Dendritic cell treated with granulocyte-macrophage colony-stimulating factor and Interleukin-4, amounts not matched to agents 40 ng/mL and 50 ng/mL, for 4 days (primary cell): ENCODE measurements at regions of chr2 and their contacts with region 1.

Region 1: DNA sequence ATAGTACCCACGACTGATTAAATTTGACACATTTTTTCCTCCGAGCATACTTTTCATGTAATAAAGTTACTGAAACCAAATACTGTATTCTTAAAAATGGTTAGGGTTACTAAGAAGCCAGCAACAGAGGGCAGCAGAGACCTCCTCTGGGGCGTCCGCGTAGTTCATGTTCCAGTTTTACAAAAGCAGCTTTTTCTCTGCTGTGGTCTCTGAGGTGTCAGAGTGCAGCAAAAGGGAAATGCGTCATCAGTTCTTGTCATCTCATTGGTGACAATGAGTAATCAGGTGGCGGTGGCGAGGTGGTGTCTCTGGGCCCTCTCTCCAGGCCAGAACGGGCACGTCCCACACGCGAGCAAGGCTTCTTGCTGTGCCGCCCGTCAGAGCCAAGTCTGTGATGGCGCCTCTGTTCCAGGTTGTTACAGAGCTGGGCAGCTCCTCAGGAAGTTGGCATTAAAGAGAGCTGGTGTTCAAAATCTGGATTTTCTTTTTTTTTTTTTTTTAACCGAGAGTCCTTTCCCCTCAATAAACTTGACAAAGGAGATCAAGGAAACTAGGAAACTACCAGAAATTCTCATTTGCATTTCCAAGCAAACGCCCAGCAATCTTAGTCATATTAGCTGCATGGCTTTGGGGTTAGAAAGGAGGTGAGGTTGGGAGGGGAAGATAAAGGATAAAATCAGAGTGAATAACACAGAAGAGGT is 98.6 kb upstream of the BZW1 start:
- H3K4me3 Mint-ChIP-seq: peak overlapping the region; percentile 71
- H3K27ac Mint-ChIP-seq: peak overlapping the region; percentile 94
- H3K4me1 Mint-ChIP-seq: peaks cover 10% of the 10 kb centered on the region
- H3K27me3 Mint-ChIP-seq: no peaks in the 10 kb centered on the region

Region 2: DNA sequence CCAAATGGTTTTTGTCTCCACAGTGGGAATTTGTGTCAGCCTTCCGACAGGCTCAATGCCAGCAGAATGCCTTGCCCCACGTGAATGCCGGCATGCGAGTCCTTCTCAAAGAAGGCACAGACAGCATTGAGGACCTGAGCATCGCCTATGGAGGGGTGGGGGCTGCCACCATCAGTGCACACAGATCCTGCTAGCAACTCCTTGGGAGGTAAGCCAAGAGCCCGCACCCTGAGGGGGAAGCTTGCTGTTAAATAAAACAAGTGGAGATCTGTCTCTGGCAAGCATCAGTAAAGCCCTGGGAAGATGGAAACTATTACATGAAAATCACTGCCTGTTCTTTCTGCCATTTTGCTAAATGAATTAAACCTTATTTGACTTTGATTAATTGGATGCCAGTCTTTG is 31.0 kb after region 1 on chr2:
- intact Hi-C with region 1: no loop called
- H3K4me3 Mint-ChIP-seq: no peak overlapping the region
- H3K27ac Mint-ChIP-seq: no peak overlapping the region
- H3K4me1 Mint-ChIP-seq: peaks cover 7% of the 10 kb centered on the region
- H3K27me3 Mint-ChIP-seq: no peaks in the 10 kb centered on the region

Region 3: GRCh38 chr2:200756618-200757321 is 43.6 kb after region 1 on chr2:
- intact Hi-C with region 1: no loop called
- H3K4me3 Mint-ChIP-seq: no peak overlapping the region
- H3K27ac Mint-ChIP-seq: no peak overlapping the region
- H3K4me1 Mint-ChIP-seq: no peaks in the 10 kb centered on the region
- H3K27me3 Mint-ChIP-seq: no peaks in the 10 kb centered on the region

Region 4: GRCh38 chr2:200888704-200889625 is 175.8 kb after region 1 on chr2 and contains the starts of genes NIF3L1 and PPIL3:
- intact Hi-C with region 1: loop called (anchors 2 kb)
- H3K4me3 Mint-ChIP-seq: peak within 1 kb of the TSS; percentile 94
- H3K27ac Mint-ChIP-seq: peak within 1 kb of the TSS; percentile 98
- H3K4me1 Mint-ChIP-seq: peaks cover 45% of the 10 kb centered on the region
- H3K27me3 Mint-ChIP-seq: no peaks in the 10 kb centered on the region

Region 5: DNA sequence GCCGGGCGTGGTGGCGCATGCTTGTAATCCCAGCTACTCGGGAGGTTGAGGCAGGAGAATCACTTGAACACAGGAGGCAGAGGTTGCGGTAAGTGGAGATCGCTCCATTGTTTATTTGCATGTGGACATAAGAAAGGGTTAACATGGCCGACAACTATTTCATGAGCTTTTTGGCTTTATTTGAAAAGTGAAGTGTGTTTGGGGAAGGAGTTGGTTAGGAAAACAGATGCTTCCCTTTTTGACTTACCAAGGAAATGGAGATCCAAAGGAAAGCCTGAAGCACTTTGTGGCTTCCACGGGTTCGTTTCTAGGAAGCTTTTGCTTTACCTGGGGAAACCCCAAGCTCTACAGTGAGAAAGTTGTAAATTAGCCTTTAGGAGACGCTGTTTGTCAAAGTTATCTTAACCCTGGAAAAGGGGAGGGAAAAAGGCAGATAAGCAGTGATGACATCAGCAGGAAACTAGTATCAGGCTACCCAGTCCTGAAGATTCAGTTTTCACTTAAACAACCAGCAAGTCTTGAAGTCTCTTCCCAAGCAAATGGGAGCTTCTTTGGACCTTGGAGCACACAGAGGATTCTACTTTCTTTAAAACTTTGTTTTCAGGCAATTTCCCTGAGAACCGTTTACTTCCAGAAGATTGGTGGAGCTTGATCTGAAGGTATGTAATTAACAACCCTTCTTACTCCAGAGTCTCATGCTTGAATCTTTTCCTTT is 469.7 kb after region 1 on chr2 and contains the start of gene CASP10:
- intact Hi-C with region 1: loop called (anchors 5 kb)
- H3K4me3 Mint-ChIP-seq: peak within 1 kb of the TSS; percentile 90
- H3K27ac Mint-ChIP-seq: peak within 1 kb of the TSS; percentile 93
- H3K4me1 Mint-ChIP-seq: peaks cover 40% of the 10 kb centered on the region
- H3K27me3 Mint-ChIP-seq: no peaks in the 10 kb centered on the region